Gastrocnemius medialis (tissue), 4 donors: ENCODE measurements at regions of chr13 and their contacts with region 1.

Region 1: GRCh38 chr13:110628477-110628793 is 13.1 kb downstream of the NAXD start:
- DNase-seq: no peak
- ATAC-seq: peak in 1 of 2 donors; percentile 61
- H3K4me3 ChIP-seq: no peak overlapping the region
- H3K27ac ChIP-seq: peak overlapping the region in 2 of 4 donors; percentile 52 to 56
- H3K4me1 ChIP-seq: peaks cover 26 to 32% of the 10 kb centered on the region in 2 donors
- H3K27me3 ChIP-seq: no peaks in the 10 kb centered on the region
- CTCF ChIP-seq: no peak
- POLR2A ChIP-seq: no peak

Region 2: DNA sequence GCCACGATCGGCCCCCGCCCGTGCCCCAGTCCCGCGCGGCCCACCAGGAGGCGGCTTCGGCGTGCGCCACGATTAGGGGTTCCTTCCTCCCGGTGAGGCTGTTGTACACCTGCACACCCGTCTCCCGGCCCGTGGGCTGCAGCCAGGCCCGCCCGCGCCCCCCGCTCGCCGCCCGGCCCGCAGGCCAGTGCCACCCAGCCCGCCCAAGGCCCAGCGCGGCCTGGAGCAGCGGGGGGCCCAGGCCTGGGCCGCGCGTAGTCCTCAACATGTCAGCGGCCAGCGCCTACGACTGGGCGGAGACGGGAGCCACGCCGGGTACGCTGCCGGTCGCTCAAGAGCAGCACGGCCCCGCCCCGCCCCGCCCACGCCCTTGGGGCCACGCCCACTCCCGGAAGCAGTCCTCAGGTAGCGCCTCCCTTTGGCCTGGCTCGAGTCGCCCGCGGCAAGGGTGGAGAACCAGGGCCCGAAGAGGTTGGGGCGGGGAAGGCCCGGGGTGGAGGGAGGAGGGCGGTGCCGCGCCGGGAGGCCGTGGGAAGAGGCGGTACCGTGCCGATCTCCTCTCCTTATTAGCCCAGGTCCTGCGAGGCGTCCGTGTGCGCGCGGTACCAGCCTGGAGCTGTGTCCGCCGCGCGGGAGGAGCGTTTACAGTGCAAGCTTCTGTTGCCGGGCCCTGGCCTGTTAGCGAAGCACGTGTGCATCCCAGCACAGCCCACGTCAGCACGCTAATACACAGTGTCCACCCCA is 77.6 kb after region 1 on chr13 and contains the start of gene CARS2:
- in situ Hi-C with region 1: loop called in 1 of 4 experiments (anchors 10 kb)
- intact Hi-C with region 1: no loop called
- DNase-seq: peak; percentile 91 to 95
- ATAC-seq: peak; percentile 86 to 91
- H3K4me3 ChIP-seq: peak within 1 kb of the TSS; percentile 59 to 77 (median 70)
- H3K27ac ChIP-seq: peak within 1 kb of the TSS; percentile 79 to 89 (median 84)
- H3K4me1 ChIP-seq: peaks cover 50 to 53% of the 10 kb centered on the region in 2 donors
- H3K27me3 ChIP-seq: no peaks in the 10 kb centered on the region
- CTCF ChIP-seq: peak in 4 of 5 experiments; percentile 25 to 32 (median 28)
- POLR2A ChIP-seq: peak; percentile 86 to 89
- total RNA-seq, gene CARS2: 22.5 to 34.8 (median 28.0) TPM